ENCODE measurements at regions of chr4 and their contacts with region 1.

Region 1: DNA sequence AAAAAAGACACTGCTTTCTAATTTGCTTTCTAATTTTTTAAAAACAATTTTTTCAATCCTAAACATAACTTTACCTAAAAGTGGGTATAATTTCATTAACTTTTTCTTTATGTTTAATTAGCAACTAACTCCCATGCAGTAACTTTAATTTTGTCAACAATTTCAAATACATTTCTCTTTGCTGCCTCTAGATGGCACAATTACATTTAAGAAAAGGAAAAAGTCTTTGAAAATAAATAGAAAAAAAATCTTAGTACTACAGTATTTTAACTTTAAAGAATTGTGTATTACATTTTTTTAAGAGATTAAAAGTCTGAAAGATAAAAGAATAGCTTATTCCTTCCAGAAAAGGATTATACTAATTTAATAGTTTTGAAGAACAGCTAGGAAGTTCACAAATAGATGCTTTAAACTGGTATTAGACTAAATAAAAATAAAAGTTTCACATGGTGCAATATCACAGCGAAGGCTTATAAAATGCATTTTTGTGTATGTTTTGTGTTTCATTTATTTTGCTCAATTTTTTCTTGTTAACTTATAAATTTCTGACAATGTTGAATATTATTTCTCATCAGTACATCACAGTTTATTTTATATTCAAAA is 105.1 kb downstream of the ADGRA3 start:
- DNase-seq: no peak
- H3K4me3 ChIP-seq: no peak overlapping the region
- H3K27ac ChIP-seq: no peak overlapping the region
- H3K4me1 ChIP-seq: no peaks in the 10 kb centered on the region
- H3K27me3 ChIP-seq: no peaks in the 10 kb centered on the region
- CTCF ChIP-seq: peak in 1 of 3 experiments; percentile 53
- POLR2A ChIP-seq: no peak

Region 2: GRCh38 chr4:22552812-22553211 is 142.1 kb after region 1 on chr4:
- intact Hi-C with region 1: no loop called
- DNase-seq: no peak
- H3K4me3 ChIP-seq: no peak overlapping the region
- H3K27ac ChIP-seq: no peak overlapping the region
- H3K4me1 ChIP-seq: no peaks in the 10 kb centered on the region
- H3K27me3 ChIP-seq: no peaks in the 10 kb centered on the region
- CTCF ChIP-seq: no peak
- POLR2A ChIP-seq: no peak

Region 3: GRCh38 chr4:22607382-22607781 is 196.6 kb after region 1 on chr4:
- intact Hi-C with region 1: loop called (anchors 5 kb)
- DNase-seq: peak; percentile 60
- H3K4me3 ChIP-seq: no peak overlapping the region
- H3K27ac ChIP-seq: no peak overlapping the region
- H3K4me1 ChIP-seq: no peaks in the 10 kb centered on the region
- H3K27me3 ChIP-seq: no peaks in the 10 kb centered on the region
- CTCF ChIP-seq: peak in 1 of 3 experiments; percentile 40
- POLR2A ChIP-seq: no peak

Region 4: DNA sequence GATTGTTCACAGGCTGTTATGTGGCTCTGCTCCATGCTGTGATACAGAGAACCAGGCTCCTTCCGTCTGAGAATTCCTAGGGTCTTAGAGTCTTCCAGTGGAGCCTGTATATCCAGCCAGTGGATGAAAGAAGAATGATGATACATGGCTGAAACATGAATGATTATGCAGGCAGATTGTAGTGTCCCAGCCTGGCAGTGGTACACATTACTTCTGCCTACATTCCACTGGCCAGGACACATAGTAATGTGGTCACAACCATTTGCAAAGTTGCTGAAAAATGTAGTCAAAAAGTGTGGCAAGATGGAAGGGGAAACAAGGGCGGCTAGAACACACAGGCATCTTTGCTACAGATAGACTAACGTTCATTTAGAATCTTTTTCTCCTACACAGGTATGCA is 277.5 kb after region 1 on chr4:
- intact Hi-C with region 1: loop called (anchors 10 kb)
- DNase-seq: no peak
- H3K4me3 ChIP-seq: no peak overlapping the region
- H3K27ac ChIP-seq: no peak overlapping the region
- H3K4me1 ChIP-seq: no peaks in the 10 kb centered on the region
- H3K27me3 ChIP-seq: no peaks in the 10 kb centered on the region
- CTCF ChIP-seq: no peak
- POLR2A ChIP-seq: no peak

Region 5: DNA sequence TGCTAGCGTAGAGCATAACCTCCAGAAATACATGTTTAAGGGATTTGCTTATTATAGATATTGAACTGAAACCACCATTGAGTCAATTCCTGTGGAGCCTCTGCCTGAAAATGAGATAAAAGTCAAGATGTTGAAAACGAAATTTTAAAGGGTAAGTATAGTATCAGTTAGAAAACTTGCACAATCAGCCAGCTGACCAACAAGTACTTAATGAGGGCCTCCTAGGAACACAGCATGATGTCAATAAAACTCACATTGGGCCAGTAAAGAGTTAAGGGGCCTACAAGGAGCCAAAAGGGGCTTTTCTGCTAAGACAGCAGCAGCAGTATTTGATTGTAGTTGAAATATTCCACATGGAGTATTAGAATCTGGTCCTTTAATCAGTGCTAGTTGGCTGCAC is 1793.2 kb after region 1 on chr4:
- intact Hi-C with region 1: no loop called
- DNase-seq: no peak
- H3K4me3 ChIP-seq: no peak overlapping the region
- H3K27ac ChIP-seq: no peak overlapping the region
- H3K4me1 ChIP-seq: no peaks in the 10 kb centered on the region
- H3K27me3 ChIP-seq: no peaks in the 10 kb centered on the region
- CTCF ChIP-seq: no peak
- POLR2A ChIP-seq: no peak